ENCODE measurements at regions of chr15 and their contacts with region 1.

Region 1: GRCh38 chr15:67065444-67066093 is at the start of gene SMAD3:
- DNase-seq: peak; percentile 95
- H3K4me3 Mint-ChIP-seq: peak within 1 kb of the TSS; percentile 92
- H3K27ac Mint-ChIP-seq: peak within 1 kb of the TSS; percentile 99
- H3K4me1 Mint-ChIP-seq: peaks cover 56% of the 10 kb centered on the region
- H3K27me3 Mint-ChIP-seq: peaks cover 17% of the 10 kb centered on the region
- total RNA-seq, gene SMAD3: 59.9 and 61.6 TPM in 2 replicates

Region 2: GRCh38 chr15:66946578-66947164 is 118.9 kb before region 1 on chr15:
- intact Hi-C with region 1: loop called (anchors 5 kb)
- DNase-seq: peak; percentile 92
- H3K4me3 Mint-ChIP-seq: no peak overlapping the region
- H3K27ac Mint-ChIP-seq: no peak overlapping the region
- H3K4me1 Mint-ChIP-seq: peaks cover 12% of the 10 kb centered on the region
- H3K27me3 Mint-ChIP-seq: peaks cover 6% of the 10 kb centered on the region

Region 3: GRCh38 chr15:67043939-67044771 is 21.4 kb before region 1 on chr15:
- intact Hi-C with region 1: loop called (anchors 2 kb)
- DNase-seq: no peak
- H3K4me3 Mint-ChIP-seq: no peak overlapping the region
- H3K27ac Mint-ChIP-seq: no peak overlapping the region
- H3K4me1 Mint-ChIP-seq: peaks cover 28% of the 10 kb centered on the region
- H3K27me3 Mint-ChIP-seq: no peaks in the 10 kb centered on the region

Region 4: DNA sequence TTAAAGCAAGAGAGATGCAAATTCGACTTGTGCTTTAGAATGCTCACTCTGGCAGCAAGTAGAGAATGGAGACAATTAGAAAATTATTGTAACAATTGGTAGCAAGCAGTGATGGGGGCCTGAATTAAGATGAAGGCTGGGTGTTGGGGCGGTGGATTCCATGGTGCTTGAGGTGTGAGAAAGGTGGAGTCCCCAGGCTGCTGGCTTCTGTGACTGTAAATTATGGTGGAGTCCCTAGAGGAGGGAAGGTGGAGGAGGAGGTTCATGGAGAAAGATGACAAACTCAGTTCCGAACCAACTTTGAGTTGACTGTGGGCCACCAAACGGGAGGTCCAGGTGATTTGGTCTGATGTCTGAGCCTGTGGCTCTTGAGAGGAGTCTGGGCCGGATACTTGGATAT is 10.9 kb before region 1 on chr15:
- intact Hi-C with region 1: no loop called
- DNase-seq: no peak
- H3K4me3 Mint-ChIP-seq: no peak overlapping the region
- H3K27ac Mint-ChIP-seq: no peak overlapping the region
- H3K4me1 Mint-ChIP-seq: peaks cover 31% of the 10 kb centered on the region
- H3K27me3 Mint-ChIP-seq: peaks cover 2% of the 10 kb centered on the region

Region 5: GRCh38 chr15:67085818-67086636 is 20.5 kb after region 1 on chr15:
- intact Hi-C with region 1: loop called (anchors 1 kb)
- DNase-seq: peak; percentile 84
- H3K4me3 Mint-ChIP-seq: peak overlapping the region; percentile 74
- H3K27ac Mint-ChIP-seq: peak overlapping the region; percentile 96
- H3K4me1 Mint-ChIP-seq: peaks cover 95% of the 10 kb centered on the region
- H3K27me3 Mint-ChIP-seq: no peaks in the 10 kb centered on the region

Region 6: DNA sequence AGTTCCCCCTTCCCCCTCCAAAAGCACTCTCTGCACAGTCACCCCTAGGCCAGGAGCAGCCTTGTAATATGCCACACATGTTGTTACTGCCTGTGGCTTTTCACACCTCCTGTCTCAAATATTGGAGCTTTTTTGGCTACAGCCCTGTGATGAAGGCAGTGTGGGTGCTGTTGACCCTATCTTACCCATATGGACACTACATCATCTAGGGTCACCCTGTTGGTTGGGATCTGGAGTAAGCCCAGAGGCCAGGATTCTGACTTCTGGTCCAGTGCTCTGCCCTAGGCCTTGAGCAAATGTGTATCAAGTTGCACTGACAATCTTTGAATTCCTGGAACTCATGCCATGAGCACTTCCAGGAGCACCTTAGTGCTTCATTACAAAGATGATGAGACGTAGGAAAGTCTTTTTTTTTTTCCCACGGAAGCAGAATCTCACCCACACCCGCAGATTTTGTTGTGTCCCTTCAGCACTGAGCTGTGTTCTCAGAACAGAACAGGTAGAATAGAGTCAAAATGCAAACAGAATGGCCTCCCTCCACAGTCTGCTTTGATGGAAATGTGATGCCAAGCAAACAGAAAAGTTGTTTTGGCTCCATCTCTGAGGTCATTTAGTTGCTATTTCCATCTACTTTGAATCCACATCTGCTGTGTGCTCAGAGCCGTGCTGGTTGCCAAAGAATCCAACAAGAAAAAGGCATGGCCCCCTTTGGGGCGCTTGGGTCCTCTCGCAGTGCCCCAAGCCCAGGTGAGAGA is 49.5 kb after region 1 on chr15:
- intact Hi-C with region 1: loop called (anchors 5 kb)
- DNase-seq: peak; percentile 78
- H3K4me3 Mint-ChIP-seq: peak overlapping the region; percentile 62
- H3K27ac Mint-ChIP-seq: peak overlapping the region; percentile 99
- H3K4me1 Mint-ChIP-seq: peaks cover 86% of the 10 kb centered on the region
- H3K27me3 Mint-ChIP-seq: no peaks in the 10 kb centered on the region

Region 7: GRCh38 chr15:67175643-67176071 is 110.1 kb after region 1 on chr15:
- intact Hi-C with region 1: loop called (anchors 5 kb)
- DNase-seq: peak; percentile 71
- H3K4me3 Mint-ChIP-seq: peak overlapping the region; percentile 24
- H3K27ac Mint-ChIP-seq: peak overlapping the region; percentile 82
- H3K4me1 Mint-ChIP-seq: peaks cover 63% of the 10 kb centered on the region
- H3K27me3 Mint-ChIP-seq: no peaks in the 10 kb centered on the region